Spleen (tissue), 13 donors: ENCODE measurements at regions of chr2 and their contacts with region 1.

Region 1: DNA sequence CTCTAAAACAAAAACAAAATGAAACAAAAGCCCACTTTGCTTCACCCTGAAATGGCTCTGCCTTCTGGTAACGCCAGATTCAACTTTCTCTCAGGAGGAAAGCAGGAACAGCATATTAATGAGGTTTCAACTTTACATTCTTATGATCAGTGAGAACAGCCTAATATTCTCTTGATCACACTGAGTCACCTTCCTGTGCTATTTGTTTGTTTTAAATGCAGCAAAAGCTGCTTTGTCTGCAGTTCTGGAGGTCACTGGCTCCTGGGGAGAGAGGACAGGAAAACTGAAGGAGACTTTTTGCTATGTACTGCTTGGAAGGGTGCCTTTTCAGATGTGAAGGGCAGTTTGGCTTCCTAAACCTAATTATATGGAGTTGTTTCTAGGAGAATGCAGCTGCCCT is 48.1 kb downstream of the MAIP1 start:
- DNase-seq: no peak
- H3K4me3 ChIP-seq: no peak overlapping the region
- H3K27ac ChIP-seq: peak overlapping the region in 4 of 8 donors; percentile 6 to 19 (median 10)
- H3K4me1 ChIP-seq: no peaks in the 10 kb centered on the region
- H3K27me3 ChIP-seq: no peaks in the 10 kb centered on the region
- CTCF ChIP-seq: no peak
- POLR2A ChIP-seq: no peak

Region 2: GRCh38 chr2:200297989-200298388 is 294.5 kb after region 1 on chr2:
- intact Hi-C with region 1: loop called (anchors 10 kb)
- DNase-seq: no peak
- H3K4me3 ChIP-seq: no peak overlapping the region
- H3K27ac ChIP-seq: no peak overlapping the region
- H3K4me1 ChIP-seq: no peaks in the 10 kb centered on the region
- H3K27me3 ChIP-seq: no peaks in the 10 kb centered on the region
- CTCF ChIP-seq: no peak
- POLR2A ChIP-seq: no peak